SK-N-SH (cell line): ENCODE measurements at regions of chr2 and their contacts with region 1.

Region 1: DNA sequence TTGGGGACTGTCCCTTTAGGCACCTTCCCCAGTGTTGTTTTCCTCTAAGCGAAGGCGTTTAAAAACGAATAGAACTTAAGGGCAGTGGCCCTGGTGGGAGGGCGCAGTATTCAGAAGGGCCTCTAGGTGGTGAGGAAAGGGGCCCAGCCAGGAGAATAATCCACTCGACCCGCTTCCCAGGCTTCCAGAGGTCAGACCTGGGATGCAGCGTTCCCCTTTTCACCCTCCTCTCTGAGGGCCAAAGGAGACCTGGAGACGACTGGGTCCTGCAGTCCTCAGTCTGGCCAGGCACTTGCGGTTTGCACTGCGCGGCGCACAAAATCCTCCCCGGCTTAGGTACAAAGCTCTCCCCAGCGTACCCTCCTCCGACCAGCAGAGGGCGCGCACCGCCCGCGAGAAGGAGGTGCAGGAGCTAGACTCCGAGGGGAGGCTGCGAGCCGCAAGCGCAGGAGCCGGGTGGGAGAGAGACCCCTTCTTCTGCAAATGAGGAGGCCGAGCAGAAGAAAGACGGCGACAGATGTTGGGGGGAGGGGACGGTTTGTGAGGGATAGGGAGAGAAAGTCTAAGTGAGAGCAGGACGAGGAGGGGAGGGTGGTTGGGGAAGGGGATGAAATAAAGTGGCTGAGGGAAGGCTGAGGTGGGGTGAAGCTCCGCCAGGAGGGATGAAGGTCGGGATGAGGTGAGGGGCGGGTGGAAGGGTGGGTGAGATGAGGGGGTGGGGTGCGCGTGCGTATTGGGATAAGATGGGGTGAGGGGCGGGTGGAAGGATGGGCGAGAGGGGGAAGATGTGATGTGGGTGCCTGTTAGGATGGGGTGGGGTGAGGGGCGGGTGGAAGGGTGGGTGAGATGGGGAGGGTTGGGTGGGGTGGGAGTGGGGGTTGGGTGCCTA is 4.9 kb downstream of the FEV start:
- DNase-seq: peak; percentile 88
- H3K4me3 ChIP-seq: peak overlapping the region; percentile 45 to 75
- H3K27ac ChIP-seq: peak overlapping the region in 1 of 2 experiments; percentile 69; a peak in 2 of 4 replicates
- H3K4me1 ChIP-seq: peaks cover 0 to 28% of the 10 kb centered on the region in 2 experiments; a peak in 1 of 4 replicates
- H3K27me3 ChIP-seq: peaks cover 28% of the 10 kb centered on the region
- CTCF ChIP-seq: peak; percentile 98
- EP300 ChIP-seq: no peak
- RAD21 ChIP-seq: peak; percentile 80

Region 2: GRCh38 chr2:218860950-218861381 is 119.1 kb before region 1 on chr2:
- CTCF ChIA-PET with region 1: interaction called, 13 read pairs
- POLR2A ChIA-PET with region 1: no interaction called
- DNase-seq: peak; percentile 92
- H3K4me3 ChIP-seq: peak overlapping the region in 1 of 2 experiments; percentile 49; a peak in 2 of 4 replicates
- H3K27ac ChIP-seq: peak overlapping the region in 1 of 2 experiments; percentile 16; a peak in 1 of 4 replicates
- H3K4me1 ChIP-seq: peaks cover 7 to 71% of the 10 kb centered on the region in 2 experiments; a peak in 2 of 4 replicates
- H3K27me3 ChIP-seq: peaks cover 46% of the 10 kb centered on the region
- CTCF ChIP-seq: no peak
- EP300 ChIP-seq: no peak
- RAD21 ChIP-seq: no peak

Region 3: GRCh38 chr2:218959141-218959731 is 20.9 kb before region 1 on chr2 and contains the start of gene CDK5R2:
- CTCF ChIA-PET with region 1: interaction called, 208 read pairs
- POLR2A ChIA-PET with region 1: interaction called, 21 read pairs
- DNase-seq: peak; percentile 98
- H3K4me3 ChIP-seq: peak within 1 kb of the TSS; percentile 60 to 63
- H3K27ac ChIP-seq: peak within 1 kb of the TSS in 1 of 2 experiments; percentile 94; a peak in 2 of 4 replicates
- H3K4me1 ChIP-seq: peaks cover 8 to 47% of the 10 kb centered on the region in 2 experiments; a peak in 2 of 4 replicates
- H3K27me3 ChIP-seq: peaks cover 41% of the 10 kb centered on the region
- CTCF ChIP-seq: no peak
- EP300 ChIP-seq: peak in 1 of 2 experiments; percentile 32; a peak in 1 of 4 replicates
- RAD21 ChIP-seq: no peak
- polyA plus RNA-seq, gene CDK5R2: 0.19 and 0.26 TPM in 2 replicates

Region 4: DNA sequence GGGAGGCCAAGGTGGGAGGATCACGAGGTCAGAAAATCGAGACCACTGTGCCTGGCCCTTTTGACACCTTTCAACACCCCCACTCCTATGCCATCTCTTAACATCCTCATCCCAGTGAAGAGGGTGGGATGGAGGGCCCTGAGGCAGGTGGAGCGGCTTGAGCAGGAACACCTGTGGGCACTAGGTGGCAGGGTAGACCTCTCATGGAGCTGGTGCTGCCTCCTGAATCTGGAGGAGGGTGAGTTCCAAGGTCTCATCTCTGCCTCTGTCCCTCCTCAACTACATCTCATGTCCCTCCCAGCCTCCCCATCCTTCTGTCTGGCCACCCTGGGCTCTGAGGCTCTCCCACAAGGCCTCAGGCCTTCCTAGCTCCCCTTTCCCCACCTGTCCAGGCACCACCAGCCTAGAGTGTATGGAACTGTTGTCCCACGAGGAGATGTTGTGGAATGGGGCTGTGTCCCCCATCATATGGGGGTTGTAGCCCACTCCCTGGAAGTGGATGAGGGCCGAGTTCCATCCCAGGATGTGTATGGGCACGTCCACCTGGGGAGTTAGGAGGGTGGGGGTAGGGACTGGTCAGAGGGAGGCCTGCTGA is 30.2 kb after region 1 on chr2:
- CTCF ChIA-PET with region 1: interaction called, 159 read pairs
- POLR2A ChIA-PET with region 1: interaction called, 3 read pairs
- DNase-seq: peak; percentile 64
- H3K4me3 ChIP-seq: no peak overlapping the region
- H3K27ac ChIP-seq: no peak overlapping the region
- H3K4me1 ChIP-seq: no peaks in the 10 kb centered on the region
- H3K27me3 ChIP-seq: no peaks in the 10 kb centered on the region
- CTCF ChIP-seq: peak; percentile 30
- EP300 ChIP-seq: no peak
- RAD21 ChIP-seq: peak; percentile 62

Region 5: DNA sequence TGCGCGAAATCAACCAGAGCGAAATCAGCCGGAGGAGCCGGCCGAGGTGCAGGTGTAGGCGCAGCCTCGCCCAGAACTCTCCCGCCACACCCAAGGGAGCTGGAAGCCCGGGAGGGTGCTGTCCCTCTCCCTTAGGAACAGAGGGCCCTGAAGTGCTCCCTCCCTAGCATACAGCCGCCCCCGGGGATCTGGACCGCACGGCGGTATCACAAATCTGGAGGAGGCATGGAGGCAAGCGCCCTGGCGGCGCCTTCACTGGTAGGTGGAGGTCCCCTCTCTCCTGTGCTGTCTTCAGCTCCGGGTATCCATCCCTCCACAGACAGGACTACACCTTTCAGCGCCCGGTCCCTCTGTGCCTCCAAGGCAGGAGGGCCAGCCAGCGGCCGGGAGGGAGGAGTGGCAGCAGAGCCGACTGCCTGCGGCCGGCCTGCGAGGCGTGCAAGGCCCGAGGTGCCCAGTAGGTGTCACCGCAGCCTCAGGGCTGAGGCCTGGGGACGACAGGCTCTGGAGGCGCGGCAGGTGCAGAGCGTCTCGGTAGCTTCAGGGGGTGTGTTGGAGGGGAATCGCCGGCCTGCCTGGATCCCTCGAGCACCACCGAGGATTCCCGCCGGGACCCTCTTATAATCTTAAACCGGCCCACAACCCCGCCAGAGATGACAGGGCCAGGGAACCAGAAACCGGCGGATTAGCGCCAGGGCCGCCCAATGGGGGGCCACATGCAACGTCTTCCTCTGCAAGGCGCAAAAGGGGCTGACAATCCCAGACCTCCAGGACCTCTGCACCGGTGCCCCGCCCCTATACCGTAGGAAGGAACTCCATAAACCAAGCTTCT is 77.8 kb after region 1 on chr2:
- CTCF ChIA-PET with region 1: interaction called, 36 read pairs
- POLR2A ChIA-PET with region 1: no interaction called
- DNase-seq: peak; percentile 86
- H3K4me3 ChIP-seq: peak overlapping the region in 1 of 2 experiments; percentile 35; a peak in 1 of 4 replicates
- H3K27ac ChIP-seq: no peak overlapping the region
- H3K4me1 ChIP-seq: peaks cover 0 to 16% of the 10 kb centered on the region in 2 experiments; a peak in 1 of 4 replicates
- H3K27me3 ChIP-seq: peaks cover 43% of the 10 kb centered on the region
- CTCF ChIP-seq: peak; percentile 78
- EP300 ChIP-seq: no peak
- RAD21 ChIP-seq: peak; percentile 77

Region 6: GRCh38 chr2:219612577-219613286 is 632.6 kb after region 1 on chr2:
- CTCF ChIA-PET with region 1: no interaction called
- POLR2A ChIA-PET with region 1: no interaction called
- DNase-seq: no peak
- H3K4me3 ChIP-seq: no peak overlapping the region
- H3K27ac ChIP-seq: no peak overlapping the region; a peak in 1 of 4 replicates
- H3K4me1 ChIP-seq: peaks cover 0 to 9% of the 10 kb centered on the region in 2 experiments; a peak in 1 of 4 replicates
- H3K27me3 ChIP-seq: no peaks in the 10 kb centered on the region
- CTCF ChIP-seq: no peak
- EP300 ChIP-seq: no peak
- RAD21 ChIP-seq: no peak